Activated CD4-positive, alpha-beta T cell treated with anti-CD3 and anti-CD28 coated beads for 36 hours (primary cell): ENCODE measurements at regions of chr6 and their contacts with region 1.

Region 1: DNA sequence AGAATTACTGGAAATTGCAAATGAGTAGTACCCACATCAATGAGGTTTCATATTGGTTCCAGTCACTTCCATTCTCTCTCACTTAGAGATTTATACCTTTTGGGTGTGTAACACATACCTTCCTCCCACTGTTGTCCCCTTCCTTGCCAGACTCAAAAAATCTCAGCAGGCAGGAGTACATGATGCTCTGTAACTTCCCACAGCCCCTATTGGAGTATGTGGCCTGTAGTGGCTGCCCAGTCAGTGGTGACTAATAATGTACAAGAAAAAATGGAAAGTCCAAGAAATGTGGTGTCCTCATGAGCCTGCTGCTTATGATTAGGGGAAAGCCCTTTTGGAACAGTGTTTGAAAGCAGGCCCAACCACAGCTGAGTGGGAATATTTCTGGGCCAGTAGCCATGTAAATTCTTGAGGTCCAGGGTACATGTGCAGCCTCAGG is 312.0 kb downstream of the ZFAND3 start:
- DNase-seq: peak; percentile 26
- ATAC-seq: peak; percentile 91
- H3K4me3 Mint-ChIP-seq: no peak overlapping the region
- H3K27ac Mint-ChIP-seq: peak overlapping the region; percentile 87
- H3K4me1 Mint-ChIP-seq: peaks cover 56% of the 10 kb centered on the region
- H3K27me3 Mint-ChIP-seq: no peaks in the 10 kb centered on the region

Region 2: GRCh38 chr6:37913210-37913609 is 218.3 kb before region 1 on chr6:
- CTCF ChIA-PET with region 1: no interaction called
- POLR2A ChIA-PET with region 1: no interaction called
- intact Hi-C with region 1: no loop called
- DNase-seq: no peak
- ATAC-seq: peak; percentile 81
- H3K4me3 Mint-ChIP-seq: no peak overlapping the region
- H3K27ac Mint-ChIP-seq: no peak overlapping the region
- H3K4me1 Mint-ChIP-seq: peaks cover 55% of the 10 kb centered on the region
- H3K27me3 Mint-ChIP-seq: no peaks in the 10 kb centered on the region

Region 3: DNA sequence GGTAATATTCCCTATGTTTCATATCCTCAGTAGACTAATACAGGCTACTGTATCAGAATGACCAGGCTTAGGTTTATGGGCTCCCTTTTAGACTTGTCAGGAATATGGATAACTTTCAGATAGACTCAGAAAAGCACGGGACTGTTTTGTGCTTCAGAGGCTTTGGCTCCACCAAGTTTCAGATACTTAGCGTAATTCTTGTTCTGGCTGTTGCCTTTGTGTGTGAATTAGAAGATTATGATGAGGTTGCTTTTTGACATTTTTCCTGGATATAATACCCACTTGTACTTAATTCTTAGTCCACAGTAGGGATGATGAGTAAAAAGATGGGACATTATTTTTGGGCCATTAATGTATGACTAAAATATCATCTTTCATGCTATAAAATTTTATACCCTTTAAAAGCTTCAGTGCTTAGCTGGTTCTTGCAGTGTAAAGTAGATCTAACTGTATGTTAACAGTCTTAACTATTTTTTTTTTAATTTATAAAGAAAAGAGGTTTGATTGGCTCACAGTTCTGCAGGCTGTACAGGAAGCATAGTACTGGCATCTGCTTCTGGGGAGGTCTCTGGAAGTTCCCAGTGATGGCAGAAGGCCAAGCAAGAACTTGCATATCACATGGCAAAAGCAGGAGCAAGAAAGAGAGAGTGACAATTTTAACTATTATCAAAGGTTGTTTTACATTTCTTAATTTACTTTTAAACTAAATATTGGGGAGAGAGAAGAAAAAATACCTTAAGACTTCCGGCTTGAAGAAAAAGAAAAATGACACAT is 191.3 kb before region 1 on chr6:
- CTCF ChIA-PET with region 1: no interaction called
- POLR2A ChIA-PET with region 1: no interaction called
- intact Hi-C with region 1: no loop called
- DNase-seq: no peak
- ATAC-seq: no peak
- H3K4me3 Mint-ChIP-seq: no peak overlapping the region
- H3K27ac Mint-ChIP-seq: no peak overlapping the region
- H3K4me1 Mint-ChIP-seq: peaks cover 57% of the 10 kb centered on the region
- H3K27me3 Mint-ChIP-seq: no peaks in the 10 kb centered on the region

Region 4: DNA sequence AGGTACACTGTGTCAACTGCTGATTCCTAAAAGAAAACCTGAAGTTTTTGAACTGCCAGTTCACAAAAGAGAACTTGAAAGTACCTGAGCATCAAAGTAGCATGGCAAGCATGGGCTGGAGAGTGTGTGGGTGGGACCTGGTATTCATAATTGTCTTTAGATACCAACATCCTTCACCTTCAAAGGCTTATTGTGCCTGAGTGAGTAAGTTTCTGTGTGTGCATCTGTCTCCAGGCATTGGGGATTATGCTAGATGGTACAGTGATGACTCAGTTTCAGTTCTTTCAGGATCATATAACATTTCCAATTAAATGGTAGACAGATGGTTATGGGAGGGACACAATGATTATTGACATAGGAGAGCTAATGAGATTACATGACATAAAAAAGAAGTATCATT is 73.6 kb before region 1 on chr6:
- CTCF ChIA-PET with region 1: no interaction called
- POLR2A ChIA-PET with region 1: no interaction called
- intact Hi-C with region 1: loop called in 1 of 2 experiments (anchors 1 kb)
- DNase-seq: peak; percentile 86
- ATAC-seq: peak; percentile 98
- H3K4me3 Mint-ChIP-seq: no peak overlapping the region
- H3K27ac Mint-ChIP-seq: no peak overlapping the region
- H3K4me1 Mint-ChIP-seq: peaks cover 33% of the 10 kb centered on the region
- H3K27me3 Mint-ChIP-seq: no peaks in the 10 kb centered on the region